CD8-positive, alpha-beta T cell (primary cell): ENCODE measurements at regions of chr1 and their contacts with region 1.

Region 1: GRCh38 chr1:147389532-147390524 is 147.3 kb downstream of the CHD1L start:
- DNase-seq: peak in 2 of 9 experiments; percentile 27 to 48
- ATAC-seq: no peak
- H3K4me3 ChIP-seq: no peak overlapping the region
- H3K4me3 Mint-ChIP-seq: no peak overlapping the region
- H3K27ac ChIP-seq: no peak overlapping the region
- H3K27ac Mint-ChIP-seq: no peak overlapping the region
- H3K4me1 ChIP-seq: no peaks in the 10 kb centered on the region
- H3K4me1 Mint-ChIP-seq: no peaks in the 10 kb centered on the region
- H3K27me3 ChIP-seq: peaks cover 0 to 2% of the 10 kb centered on the region in 2 experiments
- H3K27me3 Mint-ChIP-seq: peaks cover 18% of the 10 kb centered on the region
- CTCF ChIP-seq: peak; percentile 76

Region 2: GRCh38 chr1:147273409-147274336 is 116.2 kb before region 1 on chr1:
- CTCF ChIA-PET with region 1: interaction called, 14 read pairs
- POLR2A ChIA-PET with region 1: no interaction called
- intact Hi-C with region 1: loop called (anchors 2 to 5 kb)
- DNase-seq: peak in 5 of 9 experiments; percentile 1 to 65 (median 15)
- ATAC-seq: peak; percentile 66
- H3K4me3 ChIP-seq: no peak overlapping the region
- H3K4me3 Mint-ChIP-seq: no peak overlapping the region
- H3K27ac ChIP-seq: no peak overlapping the region
- H3K27ac Mint-ChIP-seq: no peak overlapping the region
- H3K4me1 ChIP-seq: no peaks in the 10 kb centered on the region
- H3K4me1 Mint-ChIP-seq: peaks cover 4% of the 10 kb centered on the region
- H3K27me3 ChIP-seq: no peaks in the 10 kb centered on the region
- H3K27me3 Mint-ChIP-seq: no peaks in the 10 kb centered on the region
- CTCF ChIP-seq: peak; percentile 67

Region 3: DNA sequence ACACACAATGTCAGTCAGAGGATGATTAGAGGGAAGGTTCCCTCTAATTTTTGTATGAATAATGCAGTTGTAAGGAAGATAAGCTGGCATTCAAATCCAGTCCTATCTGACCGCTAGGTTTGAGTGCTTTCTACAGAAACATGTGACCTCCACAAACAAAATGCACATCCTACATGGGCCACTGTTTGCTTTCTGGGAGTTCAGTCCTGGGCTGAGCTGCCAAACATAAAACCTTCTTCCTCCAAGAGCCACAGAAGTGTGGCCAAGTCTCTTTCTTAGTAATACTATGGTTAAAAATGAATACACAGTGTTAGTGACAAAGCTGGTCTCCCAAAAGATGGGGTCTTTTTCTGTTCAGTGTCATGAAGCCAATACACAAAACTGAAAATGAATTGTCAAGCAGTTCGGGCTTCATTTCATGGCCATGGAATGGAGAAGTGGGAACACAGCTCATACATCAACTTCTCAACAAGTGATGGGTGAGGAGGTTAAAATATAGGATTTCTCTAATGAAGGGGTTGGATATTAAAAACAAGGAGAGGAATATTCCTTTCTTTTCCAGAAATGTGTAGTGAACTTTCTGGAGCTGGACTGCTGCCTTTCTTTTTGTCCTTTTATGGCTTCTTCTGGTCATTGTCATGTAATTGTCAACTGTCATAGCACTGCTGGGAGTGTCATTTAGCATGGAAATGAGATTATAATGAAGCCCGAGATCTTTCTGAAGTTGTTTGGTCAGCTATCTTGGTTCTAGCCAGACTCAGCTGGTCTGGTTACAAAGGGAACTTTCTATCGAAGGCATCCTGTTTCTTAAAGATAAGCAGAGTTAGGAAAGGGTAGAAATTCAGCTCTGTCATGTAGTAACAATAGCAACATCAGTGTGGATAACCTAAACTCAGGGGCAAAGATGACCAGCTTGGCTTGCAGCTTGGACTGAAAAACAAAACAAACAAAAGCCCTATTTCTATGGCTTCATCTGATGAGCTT is 12.3 kb before region 1 on chr1:
- CTCF ChIA-PET with region 1: interaction called, 12 read pairs
- POLR2A ChIA-PET with region 1: no interaction called
- intact Hi-C with region 1: no loop called
- DNase-seq: no peak
- ATAC-seq: no peak
- H3K4me3 ChIP-seq: no peak overlapping the region
- H3K4me3 Mint-ChIP-seq: no peak overlapping the region
- H3K27ac ChIP-seq: no peak overlapping the region
- H3K27ac Mint-ChIP-seq: no peak overlapping the region
- H3K4me1 ChIP-seq: no peaks in the 10 kb centered on the region
- H3K4me1 Mint-ChIP-seq: no peaks in the 10 kb centered on the region
- H3K27me3 ChIP-seq: no peaks in the 10 kb centered on the region
- H3K27me3 Mint-ChIP-seq: peaks cover 18% of the 10 kb centered on the region
- CTCF ChIP-seq: no peak